ENCODE measurements at regions of chr18 and their contacts with region 1.

Region 1: GRCh38 chr18:3593904-3594661 is 144.1 kb downstream of the TGIF1 start:
- DNase-seq: peak; percentile 77 to 87 (median 85)
- ATAC-seq: peak; percentile 74 to 88 (median 82)
- H3K4me3 ChIP-seq: peak overlapping the region; percentile 40 to 46 (median 46)
- H3K27ac ChIP-seq: peak overlapping the region; percentile 95 to 98 (median 96)
- H3K4me1 ChIP-seq: peaks cover 0 to 40% (median 19%) of the 10 kb centered on the region in 4 donors
- H3K27me3 ChIP-seq: no peaks in the 10 kb centered on the region
- CTCF ChIP-seq: peak; percentile 68 to 92 (median 74)
- POLR2A ChIP-seq: peak; percentile 70

Region 2: DNA sequence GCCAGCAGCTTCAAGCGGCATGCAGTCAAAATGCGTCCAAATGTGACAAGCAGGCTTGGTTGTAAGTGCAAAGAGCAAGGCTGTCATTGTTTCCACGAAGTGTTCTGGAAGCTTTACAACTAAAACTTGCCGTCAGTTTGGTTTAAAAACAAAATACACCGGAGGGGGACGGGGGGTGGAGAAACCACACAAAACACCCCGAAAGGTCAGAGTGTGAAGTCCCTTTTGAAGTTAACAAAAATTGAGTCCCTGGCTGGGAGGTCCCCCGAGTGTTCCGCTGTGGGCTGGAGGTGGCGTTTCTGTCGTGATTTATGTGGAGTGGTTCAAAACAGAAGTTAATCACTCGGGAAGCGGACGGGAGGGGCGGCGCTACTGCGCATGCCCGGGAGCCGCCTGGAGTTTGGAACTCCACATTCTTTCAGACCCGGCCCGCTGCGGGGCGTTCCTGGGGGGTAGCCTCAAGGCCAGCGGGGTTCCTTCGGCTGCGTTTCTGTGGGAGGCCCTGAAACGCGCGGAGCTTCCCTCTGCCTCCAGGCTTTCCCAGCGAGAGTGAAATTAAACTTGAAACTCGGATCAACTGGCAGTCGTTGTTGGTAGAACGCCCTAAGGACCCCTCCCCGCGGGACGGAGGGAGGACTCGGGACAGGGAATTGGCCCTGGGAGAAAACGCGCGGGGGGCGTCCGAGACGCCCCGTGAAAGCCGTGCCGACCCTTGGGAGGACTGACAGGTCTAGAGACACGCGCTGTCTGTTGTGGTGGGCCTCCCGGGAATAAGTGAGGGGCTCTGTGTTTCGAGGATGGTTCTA is 142.7 kb before region 1 on chr18:
- intact Hi-C with region 1: loop called (anchors 10 kb)
- DNase-seq: peak; percentile 96
- ATAC-seq: peak; percentile 28 to 55 (median 32)
- H3K4me3 ChIP-seq: peak overlapping the region; percentile 73 to 79 (median 74)
- H3K27ac ChIP-seq: peak overlapping the region; percentile 99
- H3K4me1 ChIP-seq: peaks cover 0 to 24% (median 5%) of the 10 kb centered on the region in 4 donors
- H3K27me3 ChIP-seq: no peaks in the 10 kb centered on the region
- CTCF ChIP-seq: no peak
- POLR2A ChIP-seq: peak; percentile 98

Region 3: GRCh38 chr18:3679241-3679640 is 85.2 kb after region 1 on chr18:
- intact Hi-C with region 1: no loop called
- DNase-seq: no peak
- ATAC-seq: peak in 3 of 4 donors; percentile 34 to 55 (median 53)
- H3K4me3 ChIP-seq: no peak overlapping the region
- H3K27ac ChIP-seq: no peak overlapping the region
- H3K4me1 ChIP-seq: no peaks in the 10 kb centered on the region
- H3K27me3 ChIP-seq: no peaks in the 10 kb centered on the region
- CTCF ChIP-seq: no peak
- POLR2A ChIP-seq: no peak